Gastrocnemius medialis (tissue), 4 donors: ENCODE measurements at regions of chr7 and their contacts with region 1.

Region 1: GRCh38 chr7:55255496-55256435 is 109.4 kb upstream of the LANCL2 start:
- DNase-seq: peak; percentile 66 to 78
- ATAC-seq: peak; percentile 91 to 94
- H3K4me3 ChIP-seq: peak overlapping the region; percentile 60 to 66 (median 62)
- H3K27ac ChIP-seq: peak overlapping the region in 3 of 4 donors; percentile 25 to 47 (median 30)
- H3K4me1 ChIP-seq: peaks cover 5 to 15% of the 10 kb centered on the region in 2 donors
- H3K27me3 ChIP-seq: peaks cover 0 to 2% (median 0%) of the 10 kb centered on the region in 3 donors
- CTCF ChIP-seq: peak; percentile 85 to 98 (median 95)
- POLR2A ChIP-seq: no peak

Region 2: GRCh38 chr7:54773472-54774399 is 482.0 kb before region 1 on chr7:
- in situ Hi-C with region 1: loop called in 3 of 4 experiments (anchors 5 kb)
- intact Hi-C with region 1: loop called (anchors 1 kb)
- DNase-seq: peak; percentile 58 to 73
- ATAC-seq: peak; percentile 96 to 98
- H3K4me3 ChIP-seq: peak overlapping the region; percentile 41 to 63 (median 43)
- H3K27ac ChIP-seq: peak overlapping the region in 1 of 4 donors; percentile 28
- H3K4me1 ChIP-seq: peaks cover 0 to 3% of the 10 kb centered on the region in 2 donors
- H3K27me3 ChIP-seq: peaks cover 0 to 2% (median 0%) of the 10 kb centered on the region in 3 donors
- CTCF ChIP-seq: peak; percentile 76 to 84 (median 82)
- POLR2A ChIP-seq: no peak

Region 3: GRCh38 chr7:54778696-54779540 is 476.8 kb before region 1 on chr7:
- in situ Hi-C with region 1: loop called (anchors 5 kb)
- intact Hi-C with region 1: loop called (anchors 1 kb)
- DNase-seq: no peak
- ATAC-seq: no peak
- H3K4me3 ChIP-seq: no peak overlapping the region
- H3K27ac ChIP-seq: no peak overlapping the region
- H3K4me1 ChIP-seq: no peaks in the 10 kb centered on the region
- H3K27me3 ChIP-seq: no peaks in the 10 kb centered on the region
- CTCF ChIP-seq: no peak
- POLR2A ChIP-seq: no peak

Region 4: DNA sequence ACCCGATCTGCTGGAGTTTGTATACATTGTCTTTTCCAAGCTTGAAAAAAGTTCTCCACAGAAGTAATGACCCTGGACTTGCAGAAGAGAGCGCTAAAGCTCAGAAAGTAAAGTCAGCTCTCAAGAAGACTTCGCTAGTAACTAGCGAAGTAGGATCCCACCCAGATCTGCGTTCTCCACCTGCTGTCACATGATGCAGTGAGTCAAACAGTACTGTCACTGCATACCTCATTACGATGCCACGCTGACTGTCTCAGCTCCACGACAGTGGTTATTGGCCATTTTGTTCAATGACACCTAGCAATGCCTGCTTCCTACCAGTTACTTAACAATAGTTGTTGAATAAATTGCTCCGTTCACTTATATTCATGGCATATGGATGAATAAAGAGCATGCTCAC is 467.1 kb before region 1 on chr7:
- in situ Hi-C with region 1: loop called in 1 of 4 experiments (anchors 5 kb)
- intact Hi-C with region 1: loop called (anchors 1 kb)
- DNase-seq: peak in 1 of 2 donors; percentile 51
- ATAC-seq: peak; percentile 91 to 98
- H3K4me3 ChIP-seq: no peak overlapping the region
- H3K27ac ChIP-seq: no peak overlapping the region
- H3K4me1 ChIP-seq: peaks cover 2 to 7% of the 10 kb centered on the region in 2 donors
- H3K27me3 ChIP-seq: no peaks in the 10 kb centered on the region
- CTCF ChIP-seq: peak; percentile 32 to 68 (median 55)
- POLR2A ChIP-seq: no peak

Region 5: GRCh38 chr7:55018361-55019190 is 237.2 kb before region 1 on chr7 and contains the start of gene EGFR:
- in situ Hi-C with region 1: loop called in 1 of 4 experiments (anchors 10 kb)
- intact Hi-C with region 1: loop called (anchors 1 kb)
- DNase-seq: peak; percentile 67 to 72
- ATAC-seq: peak; percentile 57 to 58
- H3K4me3 ChIP-seq: peak within 1 kb of the TSS; percentile 71 to 86 (median 74)
- H3K27ac ChIP-seq: peak within 1 kb of the TSS; percentile 90 to 95 (median 91)
- H3K4me1 ChIP-seq: no peaks in the 10 kb centered on the region
- H3K27me3 ChIP-seq: peaks cover 0 to 8% (median 5%) of the 10 kb centered on the region in 3 donors
- CTCF ChIP-seq: peak in 1 of 5 experiments; percentile 11
- POLR2A ChIP-seq: peak; percentile 80 to 88
- total RNA-seq, gene EGFR: 28.0 to 34.8 (median 29.4) TPM

Region 6: GRCh38 chr7:55185941-55186609 is 69.7 kb before region 1 on chr7:
- in situ Hi-C with region 1: no loop called
- intact Hi-C with region 1: loop called (anchors 2 kb)
- DNase-seq: peak; percentile 55 to 77
- ATAC-seq: peak; percentile 72 to 77
- H3K4me3 ChIP-seq: no peak overlapping the region
- H3K27ac ChIP-seq: peak overlapping the region; percentile 69 to 84 (median 72)
- H3K4me1 ChIP-seq: peaks cover 4 to 12% of the 10 kb centered on the region in 2 donors
- H3K27me3 ChIP-seq: no peaks in the 10 kb centered on the region
- CTCF ChIP-seq: no peak
- POLR2A ChIP-seq: no peak

Region 7: DNA sequence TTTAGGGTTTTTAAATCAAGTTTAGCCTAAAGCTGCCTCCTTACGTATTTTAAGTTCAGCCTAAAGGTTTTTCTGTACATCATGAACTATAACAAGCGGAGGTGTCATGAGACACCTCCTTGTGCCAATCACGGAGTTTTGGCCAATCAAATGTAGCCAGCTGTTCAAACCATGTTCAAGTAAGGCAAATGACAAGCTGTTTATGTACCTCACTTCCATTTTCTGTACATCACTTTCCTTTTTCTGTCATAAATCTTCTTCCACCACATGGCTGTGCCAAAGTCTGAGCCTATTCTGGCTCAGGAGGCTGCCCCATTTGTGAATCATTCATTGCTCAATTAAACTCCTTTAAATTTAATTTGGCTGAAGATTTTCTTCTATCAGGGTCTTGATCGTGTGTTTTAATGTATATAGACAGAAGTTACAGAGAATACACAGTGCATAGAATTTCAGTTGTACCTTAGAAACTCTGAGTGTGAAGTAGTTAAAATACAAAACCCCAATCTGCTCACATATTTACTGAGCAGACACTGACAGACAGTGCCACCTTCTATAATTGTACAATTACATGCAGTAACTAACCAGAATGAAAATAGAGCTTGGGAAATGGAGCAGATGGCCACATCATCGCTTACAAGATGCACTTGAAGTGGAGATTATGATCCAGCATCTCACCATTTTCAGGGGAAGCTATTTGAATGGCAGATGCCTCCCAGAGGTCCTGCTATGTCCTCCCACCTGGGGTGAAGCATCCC is 32.5 kb after region 1 on chr7:
- in situ Hi-C with region 1: no loop called
- intact Hi-C with region 1: no loop called
- DNase-seq: no peak
- ATAC-seq: no peak
- H3K4me3 ChIP-seq: no peak overlapping the region
- H3K27ac ChIP-seq: no peak overlapping the region
- H3K4me1 ChIP-seq: no peaks in the 10 kb centered on the region
- H3K27me3 ChIP-seq: no peaks in the 10 kb centered on the region
- CTCF ChIP-seq: no peak
- POLR2A ChIP-seq: no peak